Calu3 (cell line): ENCODE measurements at regions of chr4 and their contacts with region 1.

Region 1: GRCh38 chr4:55321707-55322264 is 24.3 kb upstream of the SRD5A3 start:
- DNase-seq: peak; percentile 74
- H3K4me3 Mint-ChIP-seq: no peak overlapping the region
- H3K27ac Mint-ChIP-seq: no peak overlapping the region
- H3K4me1 Mint-ChIP-seq: peaks cover 34% of the 10 kb centered on the region
- H3K27me3 Mint-ChIP-seq: no peaks in the 10 kb centered on the region
- CTCF ChIP-seq: peak; percentile 42

Region 2: DNA sequence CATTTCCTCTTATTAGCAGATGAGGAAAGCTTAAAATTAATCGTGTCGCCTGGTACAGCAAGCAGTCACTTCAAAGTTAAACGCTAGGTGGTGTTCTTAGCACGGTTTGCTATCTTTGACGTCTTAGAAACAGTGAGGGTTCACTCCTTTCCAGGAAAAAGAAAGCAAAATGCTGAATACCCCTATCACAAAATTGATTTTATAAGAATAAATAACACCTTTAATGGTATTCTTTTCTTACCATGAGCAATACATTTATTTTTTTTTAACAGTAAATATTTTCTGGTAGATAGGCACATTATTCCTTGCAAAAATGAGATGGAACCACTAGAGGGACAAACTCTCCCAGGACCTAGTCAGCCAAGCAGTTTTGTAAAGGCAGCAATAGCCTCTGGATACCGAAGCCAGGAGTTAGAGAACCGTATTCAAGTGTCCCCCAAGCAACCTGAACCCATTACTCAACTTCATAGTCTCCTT is 350.3 kb before region 1 on chr4:
- CTCF ChIA-PET with region 1: no interaction called
- intact Hi-C with region 1: loop called (anchors 1 kb)
- DNase-seq: peak; percentile 15
- H3K4me3 Mint-ChIP-seq: no peak overlapping the region
- H3K27ac Mint-ChIP-seq: no peak overlapping the region
- H3K4me1 Mint-ChIP-seq: peaks cover 8% of the 10 kb centered on the region
- H3K27me3 Mint-ChIP-seq: no peaks in the 10 kb centered on the region
- CTCF ChIP-seq: peak; percentile 69

Region 3: DNA sequence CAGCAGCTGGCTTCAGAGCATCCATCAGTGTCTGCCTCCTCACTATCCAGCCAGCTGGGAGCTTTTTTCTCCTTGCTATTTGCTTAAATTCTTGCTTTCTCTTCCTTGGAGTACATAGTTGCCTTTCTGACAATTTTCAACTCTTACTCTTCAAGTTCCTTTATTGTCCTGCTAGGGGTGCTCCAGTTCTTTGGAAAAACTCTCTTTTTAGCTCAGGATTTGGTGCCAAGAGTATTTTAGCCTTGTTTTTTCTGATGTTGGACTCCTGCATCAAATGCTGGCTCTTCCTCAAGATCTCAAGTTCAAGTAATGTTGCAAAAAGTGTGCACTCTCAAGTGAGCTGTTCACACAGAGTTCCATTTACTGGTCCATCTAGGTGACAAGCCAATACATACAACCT is 322.8 kb before region 1 on chr4:
- CTCF ChIA-PET with region 1: interaction called, 4 read pairs
- intact Hi-C with region 1: loop called (anchors 2 kb)
- DNase-seq: no peak
- H3K4me3 Mint-ChIP-seq: no peak overlapping the region
- H3K27ac Mint-ChIP-seq: no peak overlapping the region
- H3K4me1 Mint-ChIP-seq: no peaks in the 10 kb centered on the region
- H3K27me3 Mint-ChIP-seq: no peaks in the 10 kb centered on the region
- CTCF ChIP-seq: peak; percentile 19

Region 4: DNA sequence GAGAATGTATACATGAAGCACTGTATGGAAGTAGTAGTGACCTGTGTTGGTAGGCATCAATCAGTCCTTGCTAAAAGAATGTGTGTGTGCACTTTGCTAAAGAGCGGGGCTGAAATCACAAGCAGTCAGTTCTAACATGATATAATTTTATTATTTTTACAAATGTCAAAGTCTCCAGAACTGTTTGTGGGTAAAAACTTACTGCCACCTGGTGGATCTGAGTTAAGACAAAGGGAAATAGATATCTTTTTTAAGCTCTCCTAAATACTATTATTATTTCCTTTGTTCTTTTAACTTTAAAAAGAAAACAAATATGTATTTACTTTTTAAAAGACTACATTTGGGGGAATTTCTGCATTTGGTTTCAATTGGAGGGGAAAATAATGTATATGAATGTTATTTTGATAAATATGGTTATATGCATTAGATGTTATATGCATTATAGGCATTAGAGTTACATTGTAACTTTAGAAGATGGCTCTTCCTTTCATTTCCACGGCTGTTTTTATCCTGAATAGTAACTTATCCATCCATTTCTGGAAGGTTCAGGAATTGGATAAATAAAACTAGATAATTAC is 232.8 kb after region 1 on chr4:
- CTCF ChIA-PET with region 1: no interaction called
- intact Hi-C with region 1: loop called (anchors 10 kb)
- DNase-seq: no peak
- H3K4me3 Mint-ChIP-seq: no peak overlapping the region
- H3K27ac Mint-ChIP-seq: no peak overlapping the region
- H3K4me1 Mint-ChIP-seq: peaks cover 13% of the 10 kb centered on the region
- H3K27me3 Mint-ChIP-seq: no peaks in the 10 kb centered on the region
- CTCF ChIP-seq: no peak